Naive thymus-derived CD4-positive, alpha-beta T cell (primary cell): ENCODE measurements at regions of chr5 and their contacts with region 1.

Region 1: GRCh38 chr5:132064738-132065331 is 4.4 kb downstream of the IL3 start:
- DNase-seq: peak; percentile 40 to 82 (median 64)
- ATAC-seq: peak; percentile 80
- H3K4me3 ChIP-seq: no peak overlapping the region
- H3K4me3 Mint-ChIP-seq: no peak overlapping the region
- H3K27ac ChIP-seq: no peak overlapping the region
- H3K27ac Mint-ChIP-seq: peak overlapping the region in 2 of 9 donors; percentile 30 to 79
- H3K4me1 ChIP-seq: peaks cover 0 to 9% of the 10 kb centered on the region in 2 donors
- H3K4me1 Mint-ChIP-seq: peaks cover 0 to 62% (median 5%) of the 10 kb centered on the region in 7 donors
- H3K27me3 ChIP-seq: no peaks in the 10 kb centered on the region
- H3K27me3 Mint-ChIP-seq: peaks cover 0 to 7% (median 0%) of the 10 kb centered on the region in 5 donors

Region 2: DNA sequence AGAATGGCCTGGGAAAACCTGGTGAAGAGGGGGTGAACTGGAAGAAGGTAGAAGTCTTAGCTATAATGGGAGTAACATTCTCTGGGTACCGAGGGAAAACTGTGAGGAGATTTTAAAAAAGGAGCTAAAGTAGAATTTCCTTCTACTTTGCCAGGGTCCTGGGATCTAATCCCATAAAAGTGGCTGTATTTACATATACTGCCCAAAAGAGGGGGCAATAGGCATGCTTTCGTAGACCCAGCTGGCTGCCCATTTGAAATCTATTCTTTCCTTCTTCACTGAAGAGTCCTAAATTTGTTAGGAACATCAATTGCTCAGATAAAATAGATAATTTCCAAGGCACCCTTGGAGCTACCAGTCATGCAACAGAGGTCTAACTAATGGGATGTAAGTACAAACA is 641.8 kb before region 1 on chr5:
- CTCF ChIA-PET with region 1: interaction called, 6 read pairs
- POLR2A ChIA-PET with region 1: no interaction called
- intact Hi-C with region 1: loop called (anchors 1 to 5 kb)
- DNase-seq: no peak
- ATAC-seq: no peak
- H3K4me3 ChIP-seq: no peak overlapping the region
- H3K4me3 Mint-ChIP-seq: no peak overlapping the region
- H3K27ac ChIP-seq: no peak overlapping the region
- H3K27ac Mint-ChIP-seq: peak overlapping the region in 8 of 9 donors; percentile 40 to 76 (median 60)
- H3K4me1 ChIP-seq: no peaks in the 10 kb centered on the region
- H3K4me1 Mint-ChIP-seq: peaks cover 0 to 24% (median 13%) of the 10 kb centered on the region in 7 donors
- H3K27me3 ChIP-seq: no peaks in the 10 kb centered on the region
- H3K27me3 Mint-ChIP-seq: no peaks in the 10 kb centered on the region

Region 3: GRCh38 chr5:131706281-131706680 is 358.6 kb before region 1 on chr5:
- CTCF ChIA-PET with region 1: no interaction called
- POLR2A ChIA-PET with region 1: no interaction called
- intact Hi-C with region 1: loop called in 1 of 2 experiments (anchors 10 kb)
- DNase-seq: no peak
- ATAC-seq: no peak
- H3K4me3 ChIP-seq: no peak overlapping the region
- H3K4me3 Mint-ChIP-seq: no peak overlapping the region
- H3K27ac ChIP-seq: no peak overlapping the region
- H3K27ac Mint-ChIP-seq: no peak overlapping the region
- H3K4me1 ChIP-seq: no peaks in the 10 kb centered on the region
- H3K4me1 Mint-ChIP-seq: peaks cover 0 to 11% (median 4%) of the 10 kb centered on the region in 7 donors
- H3K27me3 ChIP-seq: no peaks in the 10 kb centered on the region
- H3K27me3 Mint-ChIP-seq: no peaks in the 10 kb centered on the region

Region 4: GRCh38 chr5:132007399-132008165 is 57.3 kb before region 1 on chr5:
- CTCF ChIA-PET with region 1: interaction called, 6 read pairs
- POLR2A ChIA-PET with region 1: no interaction called
- intact Hi-C with region 1: loop called (anchors 1 to 2 kb)
- DNase-seq: peak; percentile 47 to 73 (median 64)
- ATAC-seq: peak; percentile 74
- H3K4me3 ChIP-seq: no peak overlapping the region
- H3K4me3 Mint-ChIP-seq: peak overlapping the region in 1 of 10 donors; percentile 3
- H3K27ac ChIP-seq: no peak overlapping the region
- H3K27ac Mint-ChIP-seq: peak overlapping the region in 2 of 9 donors; percentile 3 to 43
- H3K4me1 ChIP-seq: peaks cover 3 to 7% of the 10 kb centered on the region in 2 donors
- H3K4me1 Mint-ChIP-seq: peaks cover 19 to 39% (median 20%) of the 10 kb centered on the region in 7 donors
- H3K27me3 ChIP-seq: no peaks in the 10 kb centered on the region
- H3K27me3 Mint-ChIP-seq: peaks cover 4 to 47% (median 18%) of the 10 kb centered on the region in 5 donors

Region 5: GRCh38 chr5:132134384-132134783 is 69.5 kb after region 1 on chr5:
- CTCF ChIA-PET with region 1: no interaction called
- POLR2A ChIA-PET with region 1: no interaction called
- intact Hi-C with region 1: loop called (anchors 1 to 2 kb)
- DNase-seq: peak in 2 of 9 donors; percentile 4 to 7
- ATAC-seq: no peak
- H3K4me3 ChIP-seq: no peak overlapping the region
- H3K4me3 Mint-ChIP-seq: no peak overlapping the region
- H3K27ac ChIP-seq: no peak overlapping the region
- H3K27ac Mint-ChIP-seq: no peak overlapping the region
- H3K4me1 ChIP-seq: no peaks in the 10 kb centered on the region
- H3K4me1 Mint-ChIP-seq: peaks cover 0 to 10% (median 0%) of the 10 kb centered on the region in 7 donors
- H3K27me3 ChIP-seq: no peaks in the 10 kb centered on the region
- H3K27me3 Mint-ChIP-seq: peaks cover 15 to 65% (median 37%) of the 10 kb centered on the region in 5 donors

Region 6: DNA sequence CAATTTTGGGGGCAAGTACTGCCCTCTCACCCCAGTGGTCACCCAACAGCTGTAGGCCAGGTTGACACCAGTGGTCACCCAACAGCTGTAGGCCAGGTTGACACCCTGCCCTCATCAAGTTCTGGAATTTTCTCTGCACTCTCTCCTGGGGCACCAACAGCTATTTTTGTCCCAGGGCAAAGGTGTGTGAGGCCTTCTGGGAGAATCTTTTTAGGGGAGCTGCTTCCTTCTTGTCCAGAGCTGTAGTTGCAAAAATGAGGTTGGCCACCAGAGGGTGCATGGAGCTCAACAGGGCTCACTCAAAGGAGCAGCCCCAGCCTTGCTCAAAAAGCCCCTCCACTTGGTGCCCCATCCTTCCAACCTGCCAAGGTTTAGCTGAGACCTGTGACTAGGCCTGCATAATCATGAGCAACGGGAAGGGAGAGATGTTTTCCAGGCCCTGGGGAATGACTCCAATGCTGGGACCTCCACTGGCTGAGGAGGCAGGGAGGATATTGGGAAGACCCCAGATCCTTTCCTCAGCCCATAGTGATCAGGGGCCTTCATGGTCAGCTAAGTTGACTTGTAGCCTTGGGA is 173.4 kb after region 1 on chr5:
- CTCF ChIA-PET with region 1: no interaction called
- POLR2A ChIA-PET with region 1: no interaction called
- intact Hi-C with region 1: loop called in 1 of 2 experiments (anchors 2 kb)
- DNase-seq: peak in 8 of 9 donors; percentile 34 to 76 (median 44)
- ATAC-seq: peak; percentile 70
- H3K4me3 ChIP-seq: no peak overlapping the region
- H3K4me3 Mint-ChIP-seq: no peak overlapping the region
- H3K27ac ChIP-seq: no peak overlapping the region
- H3K27ac Mint-ChIP-seq: no peak overlapping the region
- H3K4me1 ChIP-seq: no peaks in the 10 kb centered on the region
- H3K4me1 Mint-ChIP-seq: peaks cover 0 to 2% (median 0%) of the 10 kb centered on the region in 7 donors
- H3K27me3 ChIP-seq: no peaks in the 10 kb centered on the region
- H3K27me3 Mint-ChIP-seq: peaks cover 0 to 21% (median 4%) of the 10 kb centered on the region in 5 donors

Region 7: GRCh38 chr5:133287500-133287899 is 1222.7 kb after region 1 on chr5:
- CTCF ChIA-PET with region 1: no interaction called
- POLR2A ChIA-PET with region 1: no interaction called
- intact Hi-C with region 1: no loop called
- DNase-seq: peak in 6 of 9 donors; percentile 11 to 49 (median 26)
- ATAC-seq: peak; percentile 37
- H3K4me3 ChIP-seq: no peak overlapping the region
- H3K4me3 Mint-ChIP-seq: no peak overlapping the region
- H3K27ac ChIP-seq: no peak overlapping the region
- H3K27ac Mint-ChIP-seq: peak overlapping the region in 1 of 9 donors; percentile 13
- H3K4me1 ChIP-seq: no peaks in the 10 kb centered on the region
- H3K4me1 Mint-ChIP-seq: no peaks in the 10 kb centered on the region
- H3K27me3 ChIP-seq: no peaks in the 10 kb centered on the region
- H3K27me3 Mint-ChIP-seq: no peaks in the 10 kb centered on the region